ENCODE measurements at regions of chr9 and their contacts with region 1.

Region 1: GRCh38 chr9:78296893-78297671 is at the start of gene PSAT1:
- DNase-seq: peak; percentile 96
- H3K4me3 ChIP-seq: peak within 1 kb of the TSS; percentile 64 to 81 (median 72)
- H3K27ac ChIP-seq: peak within 1 kb of the TSS; percentile 31
- H3K4me1 ChIP-seq: peaks cover 3% of the 10 kb centered on the region
- H3K27me3 ChIP-seq: no peaks in the 10 kb centered on the region
- CTCF ChIP-seq: peak in 1 of 2 donors; percentile 5
- POLR2A ChIP-seq: peak; percentile 66
- total RNA-seq, gene PSAT1: 42.0 and 47.3 TPM in 2 replicates

Region 2: GRCh38 chr9:78235756-78236538 is 61.1 kb before region 1 on chr9 and contains the start of gene CEP78:
- CTCF ChIA-PET with region 1: interaction called, 4 read pairs
- POLR2A ChIA-PET with region 1: no interaction called
- dilution Hi-C with region 1: no loop called
- intact Hi-C with region 1: loop called (anchors 1 kb)
- DNase-seq: peak; percentile 95
- H3K4me3 ChIP-seq: peak within 1 kb of the TSS; percentile 72 to 78 (median 76)
- H3K27ac ChIP-seq: peak within 1 kb of the TSS; percentile 55
- H3K4me1 ChIP-seq: peaks cover 6% of the 10 kb centered on the region
- H3K27me3 ChIP-seq: no peaks in the 10 kb centered on the region
- CTCF ChIP-seq: no peak
- POLR2A ChIP-seq: peak; percentile 76
- total RNA-seq, gene CEP78: 30.2 and 35.9 TPM in 2 replicates

Region 3: DNA sequence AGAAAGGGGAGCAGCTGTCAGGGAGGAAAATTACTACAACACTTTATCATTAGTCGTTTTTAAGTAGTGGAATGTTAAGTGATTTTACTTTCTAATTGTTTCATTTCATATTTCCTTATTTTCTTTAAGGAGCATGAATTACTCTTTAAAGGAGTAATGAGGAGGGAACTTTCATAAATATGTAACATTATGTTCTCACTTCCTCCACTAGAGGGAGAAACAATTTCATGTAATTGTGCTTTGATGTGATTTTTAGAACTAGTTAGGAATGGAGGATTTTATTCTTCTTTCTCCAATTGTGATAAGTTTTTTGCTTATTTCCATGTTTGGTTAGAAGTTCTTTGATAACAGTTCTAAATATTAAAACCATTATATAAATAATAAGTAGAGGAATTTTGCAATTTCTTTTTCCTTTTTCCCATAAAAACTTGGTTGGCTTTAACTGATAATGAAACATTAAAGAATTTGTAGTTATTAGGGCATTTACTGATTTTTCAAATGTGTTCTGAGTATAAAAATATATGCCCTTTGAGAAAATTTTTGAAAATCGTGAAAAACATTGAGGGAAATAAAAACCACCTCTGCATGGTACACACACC is 35.6 kb before region 1 on chr9:
- CTCF ChIA-PET with region 1: interaction called, 3 read pairs
- POLR2A ChIA-PET with region 1: no interaction called
- dilution Hi-C with region 1: no loop called
- intact Hi-C with region 1: loop called (anchors 2 kb)
- DNase-seq: peak; percentile 39
- H3K4me3 ChIP-seq: no peak overlapping the region
- H3K27ac ChIP-seq: no peak overlapping the region
- H3K4me1 ChIP-seq: no peaks in the 10 kb centered on the region
- H3K27me3 ChIP-seq: no peaks in the 10 kb centered on the region
- CTCF ChIP-seq: peak in 1 of 2 donors; percentile 21
- POLR2A ChIP-seq: no peak

Measured in endothelial cell of umbilical vein (primary cell).